CD8-positive, alpha-beta T cell (primary cell): ENCODE measurements at regions of chrX and their contacts with region 1.

Region 1: DNA sequence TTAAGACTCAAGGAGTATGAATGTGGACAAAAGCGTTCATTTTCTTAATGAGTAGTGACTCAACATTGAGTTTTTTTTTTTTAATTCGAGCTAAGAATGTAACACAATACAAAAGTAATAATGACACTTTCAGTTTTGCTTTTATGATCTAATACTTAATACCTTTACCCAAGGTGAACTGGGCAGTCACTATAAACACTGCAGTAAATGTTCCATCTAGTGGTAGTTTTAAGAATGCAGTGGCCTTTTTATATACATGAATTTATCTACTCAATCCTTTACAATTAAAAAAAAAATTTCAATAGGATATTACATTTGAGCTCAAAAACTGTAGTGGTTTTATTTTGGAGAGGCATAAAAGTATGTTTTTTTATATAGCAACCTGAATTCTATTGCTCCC is 33.9 kb downstream of the PDK3 start:
- DNase-seq: peak in 2 of 9 experiments; percentile 63 to 74
- ATAC-seq: peak; percentile 83
- H3K4me3 ChIP-seq: no peak overlapping the region
- H3K4me3 Mint-ChIP-seq: peak overlapping the region; percentile 50
- H3K27ac ChIP-seq: peak overlapping the region in 1 of 2 experiments; percentile 66
- H3K27ac Mint-ChIP-seq: peak overlapping the region; percentile 55
- H3K4me1 ChIP-seq: peaks cover 20% of the 10 kb centered on the region
- H3K4me1 Mint-ChIP-seq: peaks cover 29% of the 10 kb centered on the region
- H3K27me3 ChIP-seq: no peaks in the 10 kb centered on the region
- H3K27me3 Mint-ChIP-seq: no peaks in the 10 kb centered on the region
- CTCF ChIP-seq: peak; percentile 50

Region 2: DNA sequence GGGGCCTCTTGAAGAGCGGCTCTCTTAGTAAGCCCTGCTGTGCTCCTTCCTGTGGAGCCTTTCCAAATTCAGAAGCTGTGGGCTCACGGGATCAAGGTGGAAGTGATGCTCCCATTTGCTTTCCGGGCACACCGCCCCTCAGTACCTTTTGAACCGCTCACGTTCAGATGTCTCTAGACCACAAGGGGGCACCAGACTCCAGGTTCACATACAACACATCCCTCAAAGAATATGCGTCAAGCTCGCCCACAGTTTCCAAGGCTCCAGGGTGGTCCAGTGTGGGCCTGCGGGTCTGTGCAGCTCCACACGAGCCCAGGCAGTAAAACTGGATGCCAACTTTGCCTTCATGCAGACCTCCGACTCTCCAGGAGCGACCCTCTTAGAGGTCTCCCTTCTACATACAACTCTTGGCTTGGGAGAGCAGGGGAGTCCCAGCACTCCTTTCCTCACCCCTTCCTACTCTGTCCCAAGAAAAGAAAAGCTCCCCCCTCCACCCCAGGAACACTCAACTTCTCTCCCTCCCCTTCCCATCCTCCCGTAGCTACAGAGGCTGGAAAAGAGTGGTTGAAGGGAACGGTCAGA is 127.5 kb before region 1 on chrX:
- CTCF ChIA-PET with region 1: interaction called, 29 read pairs
- POLR2A ChIA-PET with region 1: no interaction called
- intact Hi-C with region 1: loop called in 1 of 2 experiments (anchors 1 kb)
- DNase-seq: peak; percentile 15 to 74 (median 55)
- ATAC-seq: peak; percentile 69
- H3K4me3 ChIP-seq: no peak overlapping the region
- H3K4me3 Mint-ChIP-seq: peak overlapping the region; percentile 59
- H3K27ac ChIP-seq: no peak overlapping the region
- H3K27ac Mint-ChIP-seq: no peak overlapping the region
- H3K4me1 ChIP-seq: no peaks in the 10 kb centered on the region
- H3K4me1 Mint-ChIP-seq: peaks cover 9% of the 10 kb centered on the region
- H3K27me3 ChIP-seq: no peaks in the 10 kb centered on the region
- H3K27me3 Mint-ChIP-seq: peaks cover 4% of the 10 kb centered on the region
- CTCF ChIP-seq: peak; percentile 52

Region 3: GRCh38 chrX:24395775-24396174 is 103.2 kb before region 1 on chrX:
- CTCF ChIA-PET with region 1: interaction called, 175 read pairs
- POLR2A ChIA-PET with region 1: interaction called, 14 read pairs
- intact Hi-C with region 1: loop called (anchors 1 kb)
- DNase-seq: peak in 6 of 9 experiments; percentile 3 to 78 (median 42)
- ATAC-seq: peak; percentile 88
- H3K4me3 ChIP-seq: no peak overlapping the region
- H3K4me3 Mint-ChIP-seq: no peak overlapping the region
- H3K27ac ChIP-seq: no peak overlapping the region
- H3K27ac Mint-ChIP-seq: no peak overlapping the region
- H3K4me1 ChIP-seq: no peaks in the 10 kb centered on the region
- H3K4me1 Mint-ChIP-seq: peaks cover 2% of the 10 kb centered on the region
- H3K27me3 ChIP-seq: no peaks in the 10 kb centered on the region
- H3K27me3 Mint-ChIP-seq: peaks cover 17% of the 10 kb centered on the region
- CTCF ChIP-seq: peak; percentile 60

Region 4: DNA sequence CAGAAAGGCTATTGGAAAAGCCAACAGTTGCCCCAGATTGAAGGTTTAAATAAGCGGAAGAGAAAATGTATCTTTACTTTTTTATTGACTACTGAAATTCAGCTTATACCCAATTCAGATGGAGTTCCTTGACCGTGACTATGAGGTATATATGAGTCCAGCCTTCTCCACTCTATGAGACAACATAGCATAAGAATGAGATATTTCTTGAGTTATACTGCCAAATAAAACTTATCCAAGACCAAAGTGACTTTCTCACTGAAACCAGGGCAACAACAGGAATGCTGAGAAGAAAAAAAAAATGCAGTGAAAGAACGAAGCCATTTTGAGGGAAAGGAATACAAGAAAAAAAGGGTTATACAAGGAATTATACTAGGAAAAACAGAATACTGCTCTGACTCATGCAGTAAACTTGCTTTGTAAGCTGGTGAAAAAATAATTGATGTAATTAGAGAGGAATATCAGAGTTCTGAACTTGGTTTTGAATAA is 50.2 kb before region 1 on chrX:
- CTCF ChIA-PET with region 1: interaction called, 4 read pairs
- POLR2A ChIA-PET with region 1: no interaction called
- intact Hi-C with region 1: loop called (anchors 10 kb)
- DNase-seq: no peak
- ATAC-seq: no peak
- H3K4me3 ChIP-seq: no peak overlapping the region
- H3K4me3 Mint-ChIP-seq: no peak overlapping the region
- H3K27ac ChIP-seq: no peak overlapping the region
- H3K27ac Mint-ChIP-seq: no peak overlapping the region
- H3K4me1 ChIP-seq: no peaks in the 10 kb centered on the region
- H3K4me1 Mint-ChIP-seq: no peaks in the 10 kb centered on the region
- H3K27me3 ChIP-seq: no peaks in the 10 kb centered on the region
- H3K27me3 Mint-ChIP-seq: no peaks in the 10 kb centered on the region
- CTCF ChIP-seq: no peak

Region 5: DNA sequence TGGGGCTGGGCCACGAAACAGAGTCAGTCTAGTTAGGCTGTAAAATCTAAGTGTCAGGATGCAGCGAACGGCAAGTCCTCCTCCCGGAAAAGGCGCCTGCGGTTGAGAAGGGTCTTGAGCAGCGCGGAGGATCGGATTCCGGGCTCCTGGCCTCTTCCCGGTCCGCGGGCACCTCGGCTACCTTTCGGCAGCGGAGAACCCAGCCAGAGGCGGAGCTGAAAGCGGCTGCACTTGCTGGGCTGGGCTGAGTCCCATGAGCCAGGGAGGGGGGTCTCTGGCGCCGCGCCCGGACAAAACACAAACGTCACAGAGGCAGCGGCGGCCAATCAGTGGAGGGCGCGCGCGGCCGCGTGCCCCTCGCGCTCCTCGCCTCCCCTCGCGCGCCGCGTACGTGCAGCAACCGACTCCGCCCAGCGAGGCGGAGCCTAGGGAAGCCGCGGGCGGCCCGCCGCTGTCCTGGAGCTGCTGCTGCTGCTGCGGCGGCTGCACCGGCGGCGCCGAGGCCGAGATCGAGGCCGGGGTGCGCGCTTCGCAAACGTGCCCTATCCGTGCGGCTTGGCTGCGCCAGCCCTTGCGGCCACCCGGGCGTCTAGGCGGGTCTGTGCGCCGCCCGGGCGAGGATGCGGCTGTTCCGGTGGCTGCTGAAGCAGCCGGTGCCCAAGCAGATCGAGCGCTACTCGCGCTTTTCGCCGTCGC is 34.0 kb before region 1 on chrX and contains the start of gene PDK3:
- CTCF ChIA-PET with region 1: interaction called, 14 read pairs
- POLR2A ChIA-PET with region 1: interaction called, 17 read pairs
- intact Hi-C with region 1: loop called (anchors 1 to 5 kb)
- DNase-seq: peak; percentile 77 to 94 (median 87)
- ATAC-seq: peak; percentile 94
- H3K4me3 ChIP-seq: peak within 1 kb of the TSS; percentile 60 to 81
- H3K4me3 Mint-ChIP-seq: peak within 1 kb of the TSS; percentile 83
- H3K27ac ChIP-seq: peak within 1 kb of the TSS; percentile 77 to 86
- H3K27ac Mint-ChIP-seq: peak within 1 kb of the TSS; percentile 94
- H3K4me1 ChIP-seq: peaks cover 36% of the 10 kb centered on the region
- H3K4me1 Mint-ChIP-seq: peaks cover 39% of the 10 kb centered on the region
- H3K27me3 ChIP-seq: no peaks in the 10 kb centered on the region
- H3K27me3 Mint-ChIP-seq: no peaks in the 10 kb centered on the region
- CTCF ChIP-seq: no peak
- total RNA-seq, gene PDK3: 13.3 to 16.8 TPM

Region 6: DNA sequence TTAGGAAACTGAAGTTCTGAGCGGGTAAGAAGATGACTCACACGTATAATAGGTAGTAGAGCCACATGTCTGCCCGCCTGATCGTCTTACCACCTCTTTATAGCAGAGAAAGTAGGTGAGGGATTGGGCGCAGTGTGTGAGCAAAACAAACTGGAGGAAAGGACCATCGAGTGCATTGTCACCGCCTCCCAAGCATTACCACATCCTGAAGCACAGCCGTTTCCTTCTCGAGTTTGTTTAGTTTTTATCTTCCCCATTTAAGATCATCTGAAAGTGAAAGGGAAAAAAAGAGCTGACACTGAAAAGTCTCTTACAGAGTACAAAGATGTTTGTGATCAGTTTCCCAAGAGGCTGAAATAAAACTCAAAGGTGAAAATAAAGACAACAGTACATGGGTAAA is 19.1 kb before region 1 on chrX:
- CTCF ChIA-PET with region 1: interaction called, 19 read pairs
- POLR2A ChIA-PET with region 1: interaction called, 6 read pairs
- intact Hi-C with region 1: loop called in 1 of 2 experiments (anchors 2 kb)
- DNase-seq: peak; percentile 47 to 94 (median 73)
- ATAC-seq: peak; percentile 94
- H3K4me3 ChIP-seq: peak overlapping the region; percentile 38 to 55
- H3K4me3 Mint-ChIP-seq: peak overlapping the region; percentile 80
- H3K27ac ChIP-seq: peak overlapping the region; percentile 78 to 95
- H3K27ac Mint-ChIP-seq: peak overlapping the region; percentile 97
- H3K4me1 ChIP-seq: peaks cover 62% of the 10 kb centered on the region
- H3K4me1 Mint-ChIP-seq: peaks cover 75% of the 10 kb centered on the region
- H3K27me3 ChIP-seq: no peaks in the 10 kb centered on the region
- H3K27me3 Mint-ChIP-seq: no peaks in the 10 kb centered on the region
- CTCF ChIP-seq: no peak

Region 7: GRCh38 chrX:24485976-24486680 is 12.8 kb before region 1 on chrX:
- CTCF ChIA-PET with region 1: interaction called, 30 read pairs
- POLR2A ChIA-PET with region 1: no interaction called
- intact Hi-C with region 1: loop called in 1 of 2 experiments (anchors 2 kb)
- DNase-seq: no peak
- ATAC-seq: no peak
- H3K4me3 ChIP-seq: no peak overlapping the region
- H3K4me3 Mint-ChIP-seq: no peak overlapping the region
- H3K27ac ChIP-seq: no peak overlapping the region
- H3K27ac Mint-ChIP-seq: no peak overlapping the region
- H3K4me1 ChIP-seq: peaks cover 18% of the 10 kb centered on the region
- H3K4me1 Mint-ChIP-seq: peaks cover 35% of the 10 kb centered on the region
- H3K27me3 ChIP-seq: no peaks in the 10 kb centered on the region
- H3K27me3 Mint-ChIP-seq: no peaks in the 10 kb centered on the region
- CTCF ChIP-seq: no peak

Region 8: DNA sequence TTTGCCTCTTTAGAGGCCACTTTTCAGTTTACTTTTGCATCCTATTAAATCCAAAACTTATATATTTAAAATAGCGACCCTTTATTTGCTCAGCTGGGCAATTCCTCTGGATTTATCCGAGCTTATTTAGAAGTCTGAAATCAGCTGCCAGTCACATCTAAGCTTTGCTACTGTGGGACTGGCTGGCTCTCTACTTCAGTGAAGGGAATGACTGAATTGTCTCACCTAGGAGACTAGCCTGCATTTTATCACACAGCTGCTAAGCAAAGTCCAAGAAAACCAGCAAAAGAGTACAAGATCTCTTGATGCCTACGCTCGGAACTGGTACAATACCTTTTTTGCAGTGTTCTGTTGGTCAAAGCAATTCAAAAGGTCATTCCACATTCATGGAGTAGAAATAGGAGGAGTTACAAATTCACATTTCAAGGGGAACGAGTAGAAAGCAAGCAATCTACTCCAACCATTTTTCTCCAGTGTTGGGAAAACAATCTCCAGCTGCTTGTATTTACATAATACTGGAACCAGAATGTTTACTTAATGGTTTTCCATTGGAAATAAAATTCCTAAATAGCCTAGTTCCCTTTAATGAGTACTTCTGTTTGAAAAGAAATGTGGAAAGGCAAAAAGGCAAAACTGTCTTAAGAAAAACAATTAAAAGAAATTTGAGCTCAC is 1877.2 kb after region 1 on chrX:
- CTCF ChIA-PET with region 1: no interaction called
- POLR2A ChIA-PET with region 1: no interaction called
- intact Hi-C with region 1: no loop called
- DNase-seq: no peak
- ATAC-seq: no peak
- H3K4me3 ChIP-seq: no peak overlapping the region
- H3K4me3 Mint-ChIP-seq: no peak overlapping the region
- H3K27ac ChIP-seq: no peak overlapping the region
- H3K27ac Mint-ChIP-seq: no peak overlapping the region
- H3K4me1 ChIP-seq: no peaks in the 10 kb centered on the region
- H3K4me1 Mint-ChIP-seq: no peaks in the 10 kb centered on the region
- H3K27me3 ChIP-seq: no peaks in the 10 kb centered on the region
- H3K27me3 Mint-ChIP-seq: no peaks in the 10 kb centered on the region
- CTCF ChIP-seq: no peak